ENCODE measurements at regions of chr2 and their contacts with region 1.

Region 1: GRCh38 chr2:32772638-32773447 is 145.0 kb downstream of the TTC27 start:
- DNase-seq: peak; percentile 41 to 58
- H3K4me3 ChIP-seq: no peak overlapping the region
- H3K4me3 Mint-ChIP-seq: no peak overlapping the region
- H3K27ac Mint-ChIP-seq: no peak overlapping the region
- H3K4me1 ChIP-seq: no peaks in the 10 kb centered on the region
- H3K4me1 Mint-ChIP-seq: peaks cover 5% of the 10 kb centered on the region
- H3K27me3 ChIP-seq: no peaks in the 10 kb centered on the region
- H3K27me3 Mint-ChIP-seq: no peaks in the 10 kb centered on the region
- CTCF ChIP-seq: peak; percentile 70 to 84

Region 2: GRCh38 chr2:32752205-32752604 is 20.6 kb before region 1 on chr2:
- CTCF ChIA-PET with region 1: no interaction called
- POLR2A ChIA-PET with region 1: no interaction called
- intact Hi-C with region 1: no loop called
- DNase-seq: no peak
- H3K4me3 ChIP-seq: no peak overlapping the region
- H3K4me3 Mint-ChIP-seq: no peak overlapping the region
- H3K27ac Mint-ChIP-seq: no peak overlapping the region
- H3K4me1 ChIP-seq: peaks cover 8% of the 10 kb centered on the region; the same call in 1 of the 2 replicates
- H3K4me1 Mint-ChIP-seq: no peaks in the 10 kb centered on the region
- H3K27me3 ChIP-seq: no peaks in the 10 kb centered on the region
- H3K27me3 Mint-ChIP-seq: no peaks in the 10 kb centered on the region
- CTCF ChIP-seq: no peak

Region 3: GRCh38 chr2:32805104-32805766 is 32.4 kb after region 1 on chr2:
- CTCF ChIA-PET with region 1: no interaction called
- POLR2A ChIA-PET with region 1: no interaction called
- intact Hi-C with region 1: loop called (anchors 1 kb)
- DNase-seq: peak; percentile 75 to 81
- H3K4me3 ChIP-seq: no peak overlapping the region
- H3K4me3 Mint-ChIP-seq: peak overlapping the region; percentile 2
- H3K27ac Mint-ChIP-seq: peak overlapping the region; percentile 65
- H3K4me1 ChIP-seq: peaks cover 34% of the 10 kb centered on the region
- H3K4me1 Mint-ChIP-seq: peaks cover 37% of the 10 kb centered on the region
- H3K27me3 ChIP-seq: no peaks in the 10 kb centered on the region
- H3K27me3 Mint-ChIP-seq: no peaks in the 10 kb centered on the region
- CTCF ChIP-seq: no peak

Region 4: GRCh38 chr2:32864334-32865111 is 91.7 kb after region 1 on chr2:
- CTCF ChIA-PET with region 1: no interaction called
- POLR2A ChIA-PET with region 1: no interaction called
- intact Hi-C with region 1: no loop called
- DNase-seq: no peak
- H3K4me3 ChIP-seq: no peak overlapping the region
- H3K4me3 Mint-ChIP-seq: no peak overlapping the region
- H3K27ac Mint-ChIP-seq: no peak overlapping the region
- H3K4me1 ChIP-seq: no peaks in the 10 kb centered on the region; the same call in 1 of the 2 replicates
- H3K4me1 Mint-ChIP-seq: peaks cover 7% of the 10 kb centered on the region
- H3K27me3 ChIP-seq: no peaks in the 10 kb centered on the region
- H3K27me3 Mint-ChIP-seq: no peaks in the 10 kb centered on the region
- CTCF ChIP-seq: no peak

Region 5: GRCh38 chr2:32937602-32938448 is 165.0 kb after region 1 on chr2:
- CTCF ChIA-PET with region 1: no interaction called
- POLR2A ChIA-PET with region 1: no interaction called
- intact Hi-C with region 1: loop called (anchors 2 kb)
- DNase-seq: peak; percentile 62 to 70
- H3K4me3 ChIP-seq: no peak overlapping the region
- H3K4me3 Mint-ChIP-seq: peak overlapping the region; percentile 10
- H3K27ac Mint-ChIP-seq: no peak overlapping the region
- H3K4me1 ChIP-seq: peaks cover 14% of the 10 kb centered on the region
- H3K4me1 Mint-ChIP-seq: peaks cover 30% of the 10 kb centered on the region
- H3K27me3 ChIP-seq: no peaks in the 10 kb centered on the region
- H3K27me3 Mint-ChIP-seq: no peaks in the 10 kb centered on the region
- CTCF ChIP-seq: no peak

Region 6: DNA sequence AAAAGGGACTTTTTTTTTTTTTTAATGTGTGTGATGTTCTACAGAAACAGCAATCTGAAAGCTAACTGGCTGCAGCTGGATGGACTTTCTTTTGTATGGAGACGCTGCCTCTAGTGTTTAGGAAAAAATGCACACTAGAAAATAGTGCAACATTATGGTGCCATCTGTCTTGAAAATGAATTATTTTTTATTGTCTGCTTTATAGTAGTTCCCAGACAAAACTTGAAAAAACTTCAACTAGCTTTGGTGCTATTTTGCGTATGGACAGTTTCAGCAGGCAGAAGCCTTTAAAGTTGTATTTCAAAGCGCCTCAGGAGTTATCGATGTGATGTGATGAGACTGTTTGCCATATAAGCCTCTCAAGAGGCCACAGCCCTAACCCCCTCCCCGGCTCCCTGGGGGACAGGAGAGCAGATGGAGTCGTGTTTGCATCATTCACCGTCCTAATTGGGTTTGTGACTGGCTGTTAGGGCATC is 260.8 kb after region 1 on chr2:
- CTCF ChIA-PET with region 1: interaction called, 5 read pairs
- POLR2A ChIA-PET with region 1: no interaction called
- intact Hi-C with region 1: loop called (anchors 1 kb)
- DNase-seq: peak in 1 of 2 experiments; percentile 50
- H3K4me3 ChIP-seq: no peak overlapping the region
- H3K4me3 Mint-ChIP-seq: no peak overlapping the region
- H3K27ac Mint-ChIP-seq: no peak overlapping the region
- H3K4me1 ChIP-seq: no peaks in the 10 kb centered on the region
- H3K4me1 Mint-ChIP-seq: peaks cover 6% of the 10 kb centered on the region
- H3K27me3 ChIP-seq: no peaks in the 10 kb centered on the region
- H3K27me3 Mint-ChIP-seq: no peaks in the 10 kb centered on the region
- CTCF ChIP-seq: peak; percentile 59 to 73

Region 7: GRCh38 chr2:33372940-33373553 is 600.2 kb after region 1 on chr2:
- CTCF ChIA-PET with region 1: no interaction called
- POLR2A ChIA-PET with region 1: no interaction called
- intact Hi-C with region 1: loop called (anchors 1 kb)
- DNase-seq: peak in 1 of 2 experiments; percentile 53
- H3K4me3 ChIP-seq: no peak overlapping the region
- H3K4me3 Mint-ChIP-seq: no peak overlapping the region
- H3K27ac Mint-ChIP-seq: no peak overlapping the region
- H3K4me1 ChIP-seq: no peaks in the 10 kb centered on the region
- H3K4me1 Mint-ChIP-seq: no peaks in the 10 kb centered on the region
- H3K27me3 ChIP-seq: no peaks in the 10 kb centered on the region
- H3K27me3 Mint-ChIP-seq: no peaks in the 10 kb centered on the region
- CTCF ChIP-seq: peak; percentile 74 to 75

Region 8: DNA sequence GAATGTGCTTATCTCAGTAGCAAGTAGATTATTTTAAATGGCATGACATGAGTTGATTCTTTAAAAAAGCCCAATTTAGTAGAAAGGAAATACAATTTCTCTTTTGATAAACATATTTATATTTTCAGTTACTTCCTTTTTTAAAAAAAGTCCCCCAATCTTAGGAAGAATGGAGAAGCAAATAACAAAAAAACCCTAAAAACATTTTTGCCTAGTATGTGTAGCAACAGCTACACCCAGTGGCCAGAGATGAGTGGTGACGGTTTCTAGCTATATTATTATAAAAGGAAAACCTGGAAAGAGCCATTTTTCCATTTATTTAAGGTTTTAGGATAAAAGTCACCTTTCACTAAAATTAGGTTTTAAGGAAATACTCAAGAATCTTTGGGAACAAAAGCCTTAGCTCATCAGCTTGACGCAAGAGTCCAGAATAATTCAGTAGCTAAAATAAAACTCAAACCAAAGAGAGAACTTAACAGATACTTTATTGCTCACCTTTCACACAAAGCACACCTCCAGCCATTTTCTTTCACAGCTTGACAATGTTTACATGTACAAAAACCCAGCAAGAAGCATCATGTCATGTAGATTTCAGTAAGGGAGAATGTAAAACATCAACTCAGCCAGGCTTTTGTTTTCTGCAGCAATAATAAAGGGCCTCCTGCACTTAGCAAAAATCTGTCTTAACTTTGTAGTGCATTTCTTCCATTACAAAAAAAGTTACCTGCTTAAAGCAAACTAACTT is 810.5 kb after region 1 on chr2:
- CTCF ChIA-PET with region 1: no interaction called
- POLR2A ChIA-PET with region 1: no interaction called
- intact Hi-C with region 1: loop called (anchors 1 kb)
- DNase-seq: peak in 1 of 2 experiments; percentile 44
- H3K4me3 ChIP-seq: no peak overlapping the region
- H3K4me3 Mint-ChIP-seq: no peak overlapping the region
- H3K27ac Mint-ChIP-seq: no peak overlapping the region
- H3K4me1 ChIP-seq: no peaks in the 10 kb centered on the region
- H3K4me1 Mint-ChIP-seq: no peaks in the 10 kb centered on the region
- H3K27me3 ChIP-seq: no peaks in the 10 kb centered on the region
- H3K27me3 Mint-ChIP-seq: no peaks in the 10 kb centered on the region
- CTCF ChIP-seq: peak; percentile 83 to 85